AG04449 (cell line): ENCODE measurements at regions of chr5 and their contacts with region 1.

Region 1: GRCh38 chr5:154189819-154190594 is 526 bp upstream of the GALNT10 start:
- DNase-seq: no peak
- H3K4me3 ChIP-seq: peak overlapping the region; percentile 84
- CTCF ChIP-seq: peak; percentile 48

Region 2: GRCh38 chr5:154174091-154174490 is 15.9 kb before region 1 on chr5:
- CTCF ChIA-PET with region 1: interaction called, 72 read pairs
- POLR2A ChIA-PET with region 1: interaction called, 3 read pairs
- DNase-seq: no peak
- H3K4me3 ChIP-seq: no peak overlapping the region
- CTCF ChIP-seq: no peak

Region 3: GRCh38 chr5:154221371-154221896 is 31.4 kb after region 1 on chr5:
- CTCF ChIA-PET with region 1: no interaction called
- POLR2A ChIA-PET with region 1: interaction called, 12 read pairs
- DNase-seq: peak; percentile 95
- H3K4me3 ChIP-seq: no peak overlapping the region
- CTCF ChIP-seq: no peak

Region 4: DNA sequence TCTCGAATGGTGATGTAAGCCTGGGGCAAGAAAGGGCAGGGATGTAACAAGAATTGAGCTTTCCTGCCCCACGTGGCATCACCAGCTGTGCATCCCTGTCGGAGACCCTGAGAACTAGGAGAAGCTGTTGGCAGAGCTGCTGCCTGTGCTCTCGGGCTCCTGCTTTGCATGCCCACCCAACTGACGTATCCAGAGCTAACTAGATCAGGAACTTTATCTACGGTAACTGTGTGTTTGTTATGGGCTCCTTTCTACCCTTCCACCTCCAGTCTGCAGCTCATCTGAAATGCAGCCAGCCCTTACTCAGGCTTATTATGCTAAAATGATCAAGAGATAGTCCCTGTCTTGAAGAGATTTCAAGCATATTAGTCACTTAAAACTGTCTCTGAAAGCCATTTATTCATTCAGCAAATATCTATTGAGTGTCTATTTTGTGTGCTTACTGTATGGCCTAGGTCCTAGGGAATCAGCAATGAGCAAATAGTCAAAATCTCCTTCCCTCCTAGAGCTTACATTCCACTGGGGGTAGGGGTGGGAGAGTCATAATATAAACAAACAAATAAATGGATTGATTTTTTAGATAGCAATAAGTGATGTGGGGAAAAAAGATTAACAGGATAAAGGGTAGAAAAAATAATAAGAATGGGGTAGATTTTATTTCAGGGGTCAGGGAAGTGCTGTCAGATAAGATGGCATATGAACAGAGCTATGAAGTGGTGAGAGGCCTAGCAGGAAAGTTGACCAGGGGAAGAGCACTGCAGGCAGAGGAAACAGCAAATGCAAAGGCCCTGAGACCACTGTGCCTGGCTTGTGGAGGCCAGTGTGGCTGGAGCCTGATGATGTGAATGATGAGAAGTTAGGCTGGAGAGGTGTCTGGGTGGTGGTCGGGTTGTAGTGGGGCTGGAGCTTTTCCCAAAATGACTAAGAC is 118.7 kb after region 1 on chr5:
- CTCF ChIA-PET with region 1: interaction called, 3 read pairs
- POLR2A ChIA-PET with region 1: interaction called, 19 read pairs
- DNase-seq: peak; percentile 77
- H3K4me3 ChIP-seq: no peak overlapping the region; the same call in 1 of the 2 replicates
- CTCF ChIP-seq: no peak

Region 5: DNA sequence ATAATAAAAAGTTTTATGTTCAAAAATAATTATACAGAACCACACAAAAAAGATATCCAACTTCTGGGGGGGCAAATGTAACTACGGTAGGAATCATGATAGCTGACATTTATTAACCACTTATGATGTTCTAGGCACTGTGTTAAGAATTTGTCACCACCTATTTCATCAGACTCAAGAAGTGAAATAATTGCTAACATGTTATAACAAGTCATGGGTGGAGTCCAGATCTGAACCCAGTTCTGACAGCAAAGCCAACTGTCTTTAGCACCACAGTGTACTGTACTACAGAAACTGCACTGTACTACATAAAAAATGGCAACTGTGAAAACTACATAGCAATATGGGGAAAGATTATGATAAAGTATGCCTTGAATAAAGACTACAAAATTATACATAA is 252.8 kb after region 1 on chr5:
- CTCF ChIA-PET with region 1: no interaction called
- POLR2A ChIA-PET with region 1: no interaction called
- DNase-seq: no peak
- H3K4me3 ChIP-seq: no peak overlapping the region
- CTCF ChIP-seq: no peak